ENCODE measurements at regions of chr4 and their contacts with region 1.

Region 1: DNA sequence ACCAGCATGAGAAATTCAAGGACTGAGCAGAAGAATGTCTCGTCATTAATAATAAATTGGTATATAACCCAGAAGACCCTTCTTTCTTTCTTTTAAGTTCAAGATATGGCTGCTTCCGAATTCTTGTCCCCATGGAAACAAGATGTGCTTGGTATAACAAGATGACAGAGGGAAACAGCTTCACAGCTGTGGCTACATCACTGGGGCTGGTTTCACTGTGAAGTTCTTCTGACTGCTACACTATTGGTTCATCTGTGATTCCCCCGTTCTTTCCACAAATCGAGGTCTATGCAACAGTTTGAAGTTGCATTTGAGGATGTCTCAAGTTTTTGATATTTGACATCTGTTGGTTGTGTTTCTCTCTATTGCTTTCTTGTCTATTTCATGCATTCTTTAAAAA is 12.3 kb upstream of the DTHD1 start:
- DNase-seq: peak; percentile 53
- H3K4me3 Mint-ChIP-seq: no peak overlapping the region
- H3K27ac Mint-ChIP-seq: no peak overlapping the region
- H3K4me1 Mint-ChIP-seq: peaks cover 34% of the 10 kb centered on the region
- H3K27me3 Mint-ChIP-seq: no peaks in the 10 kb centered on the region

Region 2: DNA sequence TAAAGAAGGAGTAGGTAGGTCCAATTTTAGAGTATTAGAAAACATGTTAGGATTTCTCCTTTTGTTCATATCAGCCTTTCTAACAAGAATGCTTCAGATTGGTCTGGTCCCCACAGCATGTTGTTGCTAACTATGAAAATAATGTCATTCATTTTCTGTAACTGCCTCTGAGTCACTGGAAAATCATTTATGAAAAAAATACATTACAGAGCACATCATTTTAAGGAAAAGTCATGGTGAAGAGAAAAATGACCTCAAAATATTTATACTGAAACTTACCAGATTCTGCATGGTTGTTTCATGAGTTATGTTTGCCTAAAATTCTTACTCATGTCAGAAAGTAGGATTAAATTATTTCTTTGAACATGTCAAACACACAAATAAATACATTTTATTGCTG is 47.5 kb after region 1 on chr4:
- CTCF ChIA-PET with region 1: no interaction called
- intact Hi-C with region 1: loop called (anchors 1 kb)
- DNase-seq: peak; percentile 22
- H3K4me3 Mint-ChIP-seq: no peak overlapping the region
- H3K27ac Mint-ChIP-seq: peak overlapping the region; percentile 80
- H3K4me1 Mint-ChIP-seq: peaks cover 48% of the 10 kb centered on the region
- H3K27me3 Mint-ChIP-seq: no peaks in the 10 kb centered on the region

Region 3: GRCh38 chr4:36332023-36332781 is 63.1 kb after region 1 on chr4:
- CTCF ChIA-PET with region 1: no interaction called
- intact Hi-C with region 1: no loop called
- DNase-seq: peak; percentile 56
- H3K4me3 Mint-ChIP-seq: no peak overlapping the region
- H3K27ac Mint-ChIP-seq: peak overlapping the region; percentile 73
- H3K4me1 Mint-ChIP-seq: peaks cover 23% of the 10 kb centered on the region
- H3K27me3 Mint-ChIP-seq: no peaks in the 10 kb centered on the region